CD8-positive, alpha-beta memory T cell (primary cell): ENCODE measurements at regions of chr12 and their contacts with region 1.

Region 1: DNA sequence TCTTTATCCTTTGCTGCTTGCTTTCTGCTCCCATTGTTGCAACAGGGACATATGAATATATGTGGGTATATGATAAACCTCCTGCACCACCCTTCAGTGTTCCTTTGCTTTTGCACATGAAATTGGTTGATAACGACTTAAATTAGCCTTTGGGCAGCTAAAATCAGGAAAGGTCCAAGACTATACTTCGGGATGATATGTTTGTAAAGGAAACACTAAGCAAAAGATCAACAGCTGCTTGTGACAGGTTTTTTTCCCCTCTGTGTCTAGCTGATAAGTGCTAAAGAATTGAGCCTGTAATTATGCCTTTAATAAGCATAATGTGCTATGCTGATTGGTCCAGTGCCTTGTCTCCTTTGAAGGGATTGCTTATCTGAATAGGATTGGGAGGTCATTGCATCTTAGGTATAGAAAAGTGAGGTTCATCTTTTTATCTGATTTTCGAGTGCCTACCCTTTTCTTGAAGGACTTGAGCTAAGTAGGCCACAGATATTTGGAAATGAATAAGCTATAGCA is 59.4 kb downstream of the PPHLN1 start:
- DNase-seq: no peak
- H3K4me3 ChIP-seq: no peak overlapping the region
- H3K4me3 Mint-ChIP-seq: no peak overlapping the region
- H3K27ac ChIP-seq: no peak overlapping the region
- H3K27ac Mint-ChIP-seq: no peak overlapping the region
- H3K4me1 ChIP-seq: no peaks in the 10 kb centered on the region
- H3K4me1 Mint-ChIP-seq: peaks cover 21 to 55% (median 29%) of the 10 kb centered on the region in 3 donors
- H3K27me3 ChIP-seq: no peaks in the 10 kb centered on the region
- H3K27me3 Mint-ChIP-seq: no peaks in the 10 kb centered on the region

Region 2: DNA sequence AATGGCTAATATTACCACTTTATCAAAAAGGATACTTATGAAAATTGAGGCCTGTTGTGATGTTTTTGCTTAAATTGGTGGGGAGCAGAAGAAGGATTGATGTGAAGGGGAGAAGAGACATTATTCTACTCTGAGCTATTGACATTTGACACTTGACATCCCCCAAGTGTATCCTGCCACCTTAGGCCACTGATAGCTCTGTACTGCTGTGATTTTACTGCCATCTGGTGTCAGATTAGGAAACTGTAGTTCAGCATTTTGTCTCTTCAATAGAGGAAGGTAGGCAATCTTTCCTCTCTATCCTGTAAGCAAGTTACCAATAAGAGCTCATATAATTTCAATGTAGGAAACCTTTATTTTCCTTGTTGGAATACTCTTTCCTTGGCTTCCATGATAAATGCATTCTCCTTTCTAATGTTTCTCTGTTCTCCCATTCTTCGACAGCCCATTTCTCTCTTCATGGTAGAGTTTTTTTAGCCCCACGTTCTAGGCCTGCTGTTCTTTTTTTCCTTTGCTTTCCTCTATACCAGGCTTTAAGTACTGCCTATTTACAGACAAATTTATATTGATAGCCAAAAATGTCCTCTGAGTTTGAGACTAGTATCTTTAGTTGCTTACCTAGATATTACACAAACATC is 13.1 kb before region 1 on chr12:
- CTCF ChIA-PET with region 1: interaction called, 16 read pairs
- POLR2A ChIA-PET with region 1: interaction called, 5 read pairs
- DNase-seq: peak in 2 of 5 donors; percentile 38 to 46
- H3K4me3 ChIP-seq: no peak overlapping the region
- H3K4me3 Mint-ChIP-seq: no peak overlapping the region
- H3K27ac ChIP-seq: no peak overlapping the region
- H3K27ac Mint-ChIP-seq: peak overlapping the region in 2 of 8 donors; percentile 50 to 75
- H3K4me1 ChIP-seq: no peaks in the 10 kb centered on the region
- H3K4me1 Mint-ChIP-seq: peaks cover 7 to 22% (median 20%) of the 10 kb centered on the region in 3 donors
- H3K27me3 ChIP-seq: no peaks in the 10 kb centered on the region
- H3K27me3 Mint-ChIP-seq: no peaks in the 10 kb centered on the region

Region 3: GRCh38 chr12:42904683-42905418 is 519.5 kb after region 1 on chr12:
- CTCF ChIA-PET with region 1: no interaction called
- POLR2A ChIA-PET with region 1: no interaction called
- DNase-seq: no peak
- H3K4me3 ChIP-seq: no peak overlapping the region
- H3K4me3 Mint-ChIP-seq: no peak overlapping the region
- H3K27ac ChIP-seq: no peak overlapping the region
- H3K27ac Mint-ChIP-seq: no peak overlapping the region
- H3K4me1 ChIP-seq: no peaks in the 10 kb centered on the region
- H3K4me1 Mint-ChIP-seq: no peaks in the 10 kb centered on the region
- H3K27me3 ChIP-seq: no peaks in the 10 kb centered on the region
- H3K27me3 Mint-ChIP-seq: no peaks in the 10 kb centered on the region